Activated B cell treated with CpG ODN at 0.5 μM for 24 hours (primary cell): ENCODE measurements at regions of chr13 and their contacts with region 1.

Region 1: GRCh38 chr13:98542568-98543377 is 34.1 kb downstream of the STK24 start:
- DNase-seq: no peak
- ATAC-seq: peak; percentile 73
- H3K4me3 Mint-ChIP-seq: peak overlapping the region; percentile 77
- H3K27ac Mint-ChIP-seq: peak overlapping the region; percentile 73
- H3K4me1 Mint-ChIP-seq: peaks cover 85% of the 10 kb centered on the region
- H3K27me3 Mint-ChIP-seq: no peaks in the 10 kb centered on the region
- CTCF ChIP-seq: no peak

Region 2: DNA sequence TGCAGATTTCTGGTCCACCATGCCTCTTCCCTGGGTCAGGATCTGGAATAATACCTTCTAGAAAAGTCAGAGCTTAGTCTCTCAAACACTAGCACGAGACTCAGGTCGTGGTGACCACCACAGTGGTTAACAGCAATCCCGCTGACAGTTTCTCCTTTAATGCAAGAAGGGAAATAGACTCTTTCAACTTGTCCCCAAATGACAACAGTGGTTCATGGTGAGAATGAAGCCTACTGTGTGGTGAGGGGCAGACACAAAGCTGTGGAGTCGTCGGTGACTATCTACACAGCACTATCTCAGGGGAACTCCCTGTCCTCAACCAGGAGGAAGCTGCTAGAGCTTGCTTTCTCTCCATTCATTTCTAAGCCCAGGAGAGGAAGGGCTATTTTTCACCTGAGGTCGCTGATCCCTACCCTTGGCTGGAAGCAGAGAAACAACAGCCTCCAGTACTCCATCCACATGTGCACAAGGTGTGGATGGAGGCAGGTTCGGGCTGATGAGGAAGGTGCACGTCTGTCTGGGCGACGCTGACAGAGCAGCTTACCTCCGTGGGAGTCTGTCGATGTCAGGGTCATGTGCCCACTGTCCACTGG is 38.3 kb before region 1 on chr13:
- CTCF ChIA-PET with region 1: no interaction called
- POLR2A ChIA-PET with region 1: interaction called, 10 read pairs
- intact Hi-C with region 1: loop called (anchors 5 kb)
- DNase-seq: no peak
- ATAC-seq: peak; percentile 21
- H3K4me3 Mint-ChIP-seq: peak overlapping the region; percentile 42
- H3K27ac Mint-ChIP-seq: peak overlapping the region; percentile 65
- H3K4me1 Mint-ChIP-seq: peaks cover 98% of the 10 kb centered on the region
- H3K27me3 Mint-ChIP-seq: no peaks in the 10 kb centered on the region
- CTCF ChIP-seq: no peak

Region 3: GRCh38 chr13:98523455-98524102 is 19.2 kb before region 1 on chr13:
- CTCF ChIA-PET with region 1: no interaction called
- POLR2A ChIA-PET with region 1: no interaction called
- intact Hi-C with region 1: loop called (anchors 2 kb)
- DNase-seq: no peak
- ATAC-seq: no peak
- H3K4me3 Mint-ChIP-seq: no peak overlapping the region
- H3K27ac Mint-ChIP-seq: peak overlapping the region; percentile 71
- H3K4me1 Mint-ChIP-seq: peaks cover 94% of the 10 kb centered on the region
- H3K27me3 Mint-ChIP-seq: no peaks in the 10 kb centered on the region
- CTCF ChIP-seq: no peak

Region 4: DNA sequence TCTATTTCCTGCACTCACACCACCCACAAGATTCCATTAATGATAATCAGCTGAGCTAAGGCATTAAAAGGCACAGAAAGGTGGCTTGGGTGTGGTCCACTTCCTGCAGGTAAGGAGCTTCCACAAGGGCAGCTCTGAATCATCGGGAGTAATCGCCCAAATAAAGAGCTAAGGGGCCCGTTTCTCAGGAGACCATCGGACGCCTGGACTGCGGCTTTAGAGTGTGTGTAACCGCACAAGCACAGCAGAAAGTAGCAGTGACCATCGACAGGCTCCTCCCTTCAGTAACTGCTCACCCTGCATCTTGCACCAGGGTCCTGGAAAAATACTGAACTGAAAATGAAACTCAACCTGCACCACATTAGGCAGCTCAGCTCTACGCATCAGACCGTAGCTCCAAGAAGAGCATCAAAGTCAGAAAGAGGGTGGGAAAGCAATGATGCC is 28.2 kb after region 1 on chr13:
- CTCF ChIA-PET with region 1: no interaction called
- POLR2A ChIA-PET with region 1: interaction called, 6 read pairs
- intact Hi-C with region 1: loop called (anchors 2 kb)
- DNase-seq: peak; percentile 39
- ATAC-seq: peak; percentile 84
- H3K4me3 Mint-ChIP-seq: peak overlapping the region; percentile 82
- H3K27ac Mint-ChIP-seq: peak overlapping the region; percentile 91
- H3K4me1 Mint-ChIP-seq: peaks cover 99% of the 10 kb centered on the region
- H3K27me3 Mint-ChIP-seq: no peaks in the 10 kb centered on the region
- CTCF ChIP-seq: no peak

Region 5: DNA sequence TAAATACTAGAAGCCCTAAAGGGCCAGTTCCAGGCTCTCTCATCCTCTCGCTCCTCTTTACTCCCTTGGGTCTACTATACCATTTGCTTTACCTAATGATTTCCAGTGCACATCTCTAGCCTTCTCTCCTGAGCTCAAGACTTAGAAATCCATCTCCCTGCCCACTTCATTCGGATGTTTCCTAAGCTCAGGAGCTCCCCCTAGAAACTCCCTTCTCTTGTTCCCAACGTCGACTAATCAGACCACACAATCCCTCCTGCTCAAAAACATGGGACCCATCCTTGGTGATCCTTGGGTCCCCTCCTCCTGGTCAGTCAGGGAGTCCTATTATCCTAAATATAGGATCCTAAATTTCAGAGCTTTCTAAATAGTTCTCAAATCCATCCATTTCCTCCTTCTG is 55.3 kb after region 1 on chr13:
- CTCF ChIA-PET with region 1: no interaction called
- POLR2A ChIA-PET with region 1: no interaction called
- intact Hi-C with region 1: no loop called
- DNase-seq: no peak
- ATAC-seq: no peak
- H3K4me3 Mint-ChIP-seq: no peak overlapping the region
- H3K27ac Mint-ChIP-seq: no peak overlapping the region
- H3K4me1 Mint-ChIP-seq: peaks cover 9% of the 10 kb centered on the region
- H3K27me3 Mint-ChIP-seq: no peaks in the 10 kb centered on the region
- CTCF ChIP-seq: no peak

Region 6: GRCh38 chr13:98741741-98742435 is 199.1 kb after region 1 on chr13:
- CTCF ChIA-PET with region 1: no interaction called
- POLR2A ChIA-PET with region 1: no interaction called
- intact Hi-C with region 1: no loop called
- DNase-seq: no peak
- ATAC-seq: no peak
- H3K4me3 Mint-ChIP-seq: no peak overlapping the region
- H3K27ac Mint-ChIP-seq: no peak overlapping the region
- H3K4me1 Mint-ChIP-seq: no peaks in the 10 kb centered on the region
- H3K27me3 Mint-ChIP-seq: peaks cover 4% of the 10 kb centered on the region
- CTCF ChIP-seq: no peak

Region 7: GRCh38 chr13:99103536-99103935 is 560.8 kb after region 1 on chr13:
- CTCF ChIA-PET with region 1: no interaction called
- POLR2A ChIA-PET with region 1: no interaction called
- intact Hi-C with region 1: no loop called
- DNase-seq: no peak
- ATAC-seq: no peak
- H3K4me3 Mint-ChIP-seq: no peak overlapping the region
- H3K27ac Mint-ChIP-seq: no peak overlapping the region
- H3K4me1 Mint-ChIP-seq: peaks cover 3% of the 10 kb centered on the region
- H3K27me3 Mint-ChIP-seq: peaks cover 17% of the 10 kb centered on the region
- CTCF ChIP-seq: no peak